ENCODE measurements at regions of chr19 and their contacts with region 1.

Region 1: GRCh38 chr19:6632002-6632621 is 37.8 kb downstream of the TNFSF14 start:
- DNase-seq: no peak

Region 2: DNA sequence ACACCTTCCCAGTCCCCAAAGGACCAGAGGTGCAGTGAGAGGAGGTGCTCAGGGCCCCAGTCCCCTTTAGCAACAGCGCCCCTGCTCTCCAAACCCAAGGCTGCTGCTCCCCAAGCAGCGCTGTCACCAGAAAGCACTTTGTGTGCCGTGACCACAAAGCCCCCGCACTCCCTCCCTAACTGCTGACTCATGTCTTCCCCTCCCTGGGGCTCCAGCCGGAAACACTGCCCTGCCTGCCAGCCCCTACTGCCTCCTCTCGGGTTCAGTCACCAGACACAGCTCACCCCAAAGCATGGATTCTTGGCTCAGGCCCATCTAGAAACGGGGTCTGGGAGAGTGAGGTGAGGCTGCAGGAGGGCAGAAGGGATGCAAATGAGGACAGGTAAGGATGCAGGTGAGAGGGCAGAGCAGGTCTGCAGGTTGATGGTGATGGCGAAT is 42.8 kb after region 1 on chr19:
- intact Hi-C with region 1: no loop called
- DNase-seq: peak; percentile 90

Region 3: GRCh38 chr19:6862673-6863078 is 230.6 kb after region 1 on chr19:
- intact Hi-C with region 1: loop called in 1 of 2 experiments (anchors 10 kb)
- DNase-seq: peak; percentile 94